HepG2 (cell line): ENCODE measurements at regions of chr6 and their contacts with region 1.

Region 1: DNA sequence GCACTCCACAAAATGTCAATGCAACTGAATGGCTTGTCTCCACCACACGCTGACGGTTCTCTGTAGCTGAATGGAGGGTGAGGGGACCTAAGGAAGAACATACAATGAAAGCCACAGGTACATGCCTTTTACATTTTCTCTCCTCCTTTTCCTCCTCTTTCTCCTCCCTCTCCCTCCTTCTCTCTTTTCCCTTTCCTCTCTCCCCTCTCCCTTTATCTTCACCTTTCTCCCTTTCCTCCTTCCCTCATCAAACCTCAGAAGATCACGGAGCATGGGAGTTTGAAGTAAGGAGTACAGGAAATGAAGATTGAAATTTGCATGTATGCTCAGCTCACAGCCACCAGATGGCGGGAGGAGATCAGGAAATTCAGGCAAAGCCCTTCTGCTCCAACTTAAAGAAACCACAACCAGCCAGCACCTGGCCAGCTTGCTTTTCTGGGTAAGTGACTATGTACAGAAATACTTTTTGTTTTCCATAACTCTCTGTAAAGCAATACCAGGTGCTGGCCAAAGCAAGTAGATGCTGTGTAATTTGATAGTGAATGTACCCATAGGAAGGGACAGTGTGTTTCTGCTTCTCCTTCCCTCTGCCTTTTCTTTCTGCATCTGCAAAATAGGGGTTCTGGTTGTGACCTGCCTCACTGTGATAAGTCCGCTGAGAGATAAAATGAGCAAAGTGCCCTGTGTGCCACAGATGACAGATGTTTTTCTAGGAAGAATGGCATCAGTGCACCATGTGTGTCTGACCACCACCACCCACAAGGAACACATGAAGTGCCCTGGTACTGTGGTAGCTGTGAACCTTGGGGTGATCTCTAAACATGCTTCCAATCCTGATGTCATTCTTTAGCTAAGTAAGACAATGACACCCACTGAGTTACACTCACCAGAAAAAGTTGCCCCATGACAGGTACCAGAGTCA is 18.6 kb upstream of the FOXO3 start:
- DNase-seq: peak; percentile 51
- ATAC-seq: peak; percentile 84
- H3K4me3 ChIP-seq: no peak overlapping the region
- H3K27ac ChIP-seq: no peak overlapping the region
- H3K4me1 ChIP-seq: peaks cover 15% of the 10 kb centered on the region
- H3K27me3 ChIP-seq: peaks cover 0 to 11% of the 10 kb centered on the region in 2 experiments; a peak in 1 of 5 replicates
- CTCF ChIP-seq: peak; percentile 92
- EP300 ChIP-seq: no peak
- POLR2A ChIP-seq: no peak
- RAD21 ChIP-seq: peak; percentile 86

Region 2: DNA sequence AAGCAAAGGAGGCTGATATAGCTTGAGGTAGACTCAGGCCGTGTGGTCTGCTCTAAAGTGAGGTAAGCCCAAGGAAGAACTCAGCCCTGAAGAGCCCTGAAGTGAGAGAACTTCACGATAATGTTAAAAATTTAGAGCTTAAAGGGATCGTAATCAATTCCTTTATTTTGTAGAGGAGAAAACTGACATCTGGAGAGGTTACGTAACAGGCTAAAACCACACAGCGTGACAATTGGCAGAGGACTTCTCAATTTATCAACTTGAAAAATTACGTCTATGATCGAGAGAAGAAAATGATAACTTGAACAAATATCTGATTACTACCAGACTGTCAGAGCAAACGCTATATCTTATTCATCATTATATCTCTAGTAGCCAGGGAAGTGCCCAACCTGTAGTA is 103.2 kb before region 1 on chr6:
- CTCF ChIA-PET with region 1: no interaction called
- POLR2A ChIA-PET with region 1: no interaction called
- in situ Hi-C with region 1: no loop called
- intact Hi-C with region 1: no loop called
- DNase-seq: no peak
- ATAC-seq: no peak
- H3K4me3 ChIP-seq: no peak overlapping the region
- H3K27ac ChIP-seq: no peak overlapping the region
- H3K4me1 ChIP-seq: no peaks in the 10 kb centered on the region
- H3K27me3 ChIP-seq: no peaks in the 10 kb centered on the region
- CTCF ChIP-seq: no peak
- EP300 ChIP-seq: no peak
- POLR2A ChIP-seq: no peak
- RAD21 ChIP-seq: no peak

Region 3: GRCh38 chr6:108782179-108783041 is 240.3 kb after region 1 on chr6:
- CTCF ChIA-PET with region 1: interaction called, 12 read pairs
- POLR2A ChIA-PET with region 1: no interaction called
- in situ Hi-C with region 1: no loop called
- intact Hi-C with region 1: loop called (anchors 1 kb)
- DNase-seq: peak; percentile 40
- ATAC-seq: peak; percentile 91
- H3K4me3 ChIP-seq: peak overlapping the region; percentile 49 to 85 (median 73)
- H3K27ac ChIP-seq: no peak overlapping the region
- H3K4me1 ChIP-seq: peaks cover 63% of the 10 kb centered on the region
- H3K27me3 ChIP-seq: no peaks in the 10 kb centered on the region
- CTCF ChIP-seq: peak; percentile 96
- EP300 ChIP-seq: no peak
- POLR2A ChIP-seq: no peak
- RAD21 ChIP-seq: peak; percentile 86

Region 4: GRCh38 chr6:108896111-108896661 is 354.1 kb after region 1 on chr6:
- CTCF ChIA-PET with region 1: interaction called, 25 read pairs
- POLR2A ChIA-PET with region 1: no interaction called
- in situ Hi-C with region 1: no loop called
- intact Hi-C with region 1: loop called (anchors 1 kb)
- DNase-seq: no peak
- ATAC-seq: no peak
- H3K4me3 ChIP-seq: no peak overlapping the region
- H3K27ac ChIP-seq: no peak overlapping the region
- H3K4me1 ChIP-seq: peaks cover 15% of the 10 kb centered on the region
- H3K27me3 ChIP-seq: peaks cover 0 to 1% of the 10 kb centered on the region in 2 experiments; a peak in 1 of 5 replicates
- CTCF ChIP-seq: no peak
- EP300 ChIP-seq: no peak
- POLR2A ChIP-seq: no peak
- RAD21 ChIP-seq: no peak